Left colon (tissue), 2 donors: ENCODE measurements at regions of chr1 and their contacts with region 1.

Region 1: GRCh38 chr1:37673920-37674319 is 18.4 kb upstream of the CDCA8 start:
- DNase-seq: peak in 1 of 2 donors; percentile 24
- ATAC-seq: peak; percentile 70

Region 2: GRCh38 chr1:37602750-37603694 is 70.9 kb before region 1 on chr1:
- intact Hi-C with region 1: loop called in 1 of 2 experiments (anchors 5 kb)
- DNase-seq: peak in 1 of 2 donors; percentile 24
- ATAC-seq: peak; percentile 58